HAP-1 (cell line): ENCODE measurements at regions of chr4 and their contacts with region 1.

Region 1: GRCh38 chr4:140359562-140360427 is 13.7 kb upstream of the SCOC start:
- DNase-seq: peak; percentile 82 to 94
- H3K4me3 ChIP-seq: no peak overlapping the region
- H3K4me1 ChIP-seq: no peaks in the 10 kb centered on the region
- H3K27me3 ChIP-seq: peaks cover 10% of the 10 kb centered on the region

Region 2: DNA sequence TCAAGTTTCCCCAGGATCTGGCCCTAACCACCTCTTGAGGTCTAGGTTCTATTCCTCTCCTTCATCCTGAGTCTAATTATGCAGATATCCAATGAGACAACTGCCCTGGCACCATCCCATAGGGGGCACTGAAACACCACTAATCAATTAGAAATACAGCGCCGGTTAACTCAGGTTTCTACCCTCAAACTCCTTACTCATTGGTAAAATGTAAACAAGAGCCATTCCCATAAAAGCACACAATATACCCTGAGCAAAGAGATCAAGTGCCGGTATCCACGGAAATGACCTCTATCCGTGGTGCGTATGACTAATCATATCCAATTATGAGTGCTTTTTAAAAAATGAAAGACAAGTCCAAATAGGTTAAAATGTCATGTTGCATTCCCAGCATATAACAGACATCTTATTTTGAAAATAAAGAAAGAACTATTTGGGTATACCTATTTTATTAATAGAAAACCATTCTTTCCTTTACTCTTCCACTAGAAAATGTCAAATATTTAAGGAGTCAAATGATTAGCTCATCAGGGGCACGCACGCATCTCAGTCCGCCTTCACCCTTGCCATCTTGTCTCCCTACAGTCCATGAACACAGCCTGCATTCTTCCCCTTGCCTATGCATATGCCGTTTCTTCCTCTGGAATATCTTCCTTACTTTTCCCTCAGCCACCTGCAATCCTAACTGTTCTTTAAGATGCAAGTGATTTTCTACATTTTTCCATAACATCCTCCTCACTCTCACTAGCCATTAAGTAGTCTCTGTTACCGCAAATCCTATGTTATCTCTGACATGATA is 346.9 kb before region 1 on chr4:
- in situ Hi-C with region 1: loop called (anchors 25 kb)
- DNase-seq: peak; percentile 75 to 81
- H3K4me3 ChIP-seq: no peak overlapping the region
- H3K4me1 ChIP-seq: peaks cover 3% of the 10 kb centered on the region
- H3K27me3 ChIP-seq: no peaks in the 10 kb centered on the region; the same call in 1 of the 2 replicates

Region 3: DNA sequence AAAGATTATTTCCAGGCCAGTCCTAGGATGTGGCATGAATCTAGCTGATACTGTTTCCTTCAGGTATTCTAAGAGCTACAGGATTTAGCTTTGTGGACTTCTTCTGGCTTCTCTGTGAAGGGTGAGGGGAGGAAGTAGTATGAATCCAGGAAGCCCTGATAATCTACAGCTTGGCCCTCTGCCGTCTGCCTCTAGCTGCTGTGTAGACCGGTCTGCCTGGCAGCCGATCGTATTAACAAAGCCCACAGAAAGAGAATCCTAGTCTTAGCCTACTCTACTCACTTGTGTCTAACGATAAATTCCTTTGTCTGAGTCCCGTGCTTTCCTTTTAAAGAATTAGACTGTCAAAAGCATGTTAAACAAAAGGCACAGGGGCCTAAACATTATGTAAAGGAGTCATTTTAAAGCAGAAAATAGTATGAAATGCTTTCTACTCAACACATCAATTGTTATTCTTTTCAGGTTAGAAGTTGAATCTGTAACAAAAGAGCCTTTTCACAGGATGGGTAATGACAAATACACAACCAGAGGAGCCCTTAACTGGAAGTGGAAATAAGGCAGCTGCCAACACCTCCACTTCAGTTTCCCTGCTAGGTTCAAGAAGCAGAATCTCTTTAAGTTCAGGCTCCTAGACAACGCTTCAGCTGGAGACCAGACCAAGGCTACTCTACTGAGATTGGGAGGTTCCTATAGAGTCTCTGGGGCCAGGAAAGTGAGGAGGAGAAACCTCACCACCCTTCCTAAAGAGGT is 257.9 kb after region 1 on chr4:
- in situ Hi-C with region 1: loop called (anchors 5 kb)
- DNase-seq: peak; percentile 79 to 98
- H3K4me3 ChIP-seq: no peak overlapping the region
- H3K4me1 ChIP-seq: peaks cover 30% of the 10 kb centered on the region
- H3K27me3 ChIP-seq: no peaks in the 10 kb centered on the region

Region 4: GRCh38 chr4:140861359-140862176 is 501.8 kb after region 1 on chr4:
- in situ Hi-C with region 1: loop called (anchors 25 kb)
- DNase-seq: peak; percentile 75 to 79
- H3K4me3 ChIP-seq: no peak overlapping the region
- H3K4me1 ChIP-seq: peaks cover 4% of the 10 kb centered on the region; the same call in 1 of the 2 replicates
- H3K27me3 ChIP-seq: no peaks in the 10 kb centered on the region

Region 5: GRCh38 chr4:140924761-140925392 is 565.1 kb after region 1 on chr4:
- in situ Hi-C with region 1: no loop called
- DNase-seq: no peak
- H3K4me3 ChIP-seq: no peak overlapping the region
- H3K4me1 ChIP-seq: no peaks in the 10 kb centered on the region
- H3K27me3 ChIP-seq: no peaks in the 10 kb centered on the region